Calu3 (cell line): ENCODE measurements at regions of chr6 and their contacts with region 1.

Region 1: DNA sequence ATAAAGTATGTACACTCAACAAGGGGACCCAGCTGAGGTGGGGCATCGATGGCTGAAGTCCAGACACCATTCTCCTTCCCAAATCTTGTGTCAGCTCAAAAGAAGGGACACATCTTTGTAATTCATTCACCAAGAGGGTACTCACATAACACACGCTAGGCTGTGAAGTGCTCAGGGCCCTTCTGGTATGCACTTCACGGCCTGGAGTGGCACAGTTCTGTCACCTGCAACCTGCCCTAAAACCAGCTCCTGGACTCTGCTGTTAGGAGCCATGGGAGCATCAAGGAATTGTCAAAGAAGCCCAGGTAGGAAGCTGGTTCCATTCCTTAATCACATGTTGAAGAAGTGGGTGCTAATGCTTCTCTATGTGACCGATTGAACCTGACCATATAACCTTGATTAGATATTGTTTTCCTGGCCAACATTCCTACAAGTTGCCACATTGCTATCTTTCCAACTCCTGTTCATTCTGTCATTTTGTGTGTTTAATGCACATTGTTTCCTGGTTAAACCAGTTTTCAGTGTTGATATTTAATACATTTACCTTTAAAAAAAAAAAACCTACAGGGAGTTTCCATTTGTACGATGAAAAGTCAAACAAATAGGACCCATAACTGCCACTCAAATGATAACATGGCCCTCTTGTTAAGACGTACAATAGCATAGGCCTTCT is 127.3 kb downstream of the TNFRSF21 start:
- DNase-seq: peak; percentile 20
- H3K4me3 Mint-ChIP-seq: peak overlapping the region; percentile 7
- H3K27ac Mint-ChIP-seq: peak overlapping the region; percentile 77
- H3K4me1 Mint-ChIP-seq: peaks cover 60% of the 10 kb centered on the region
- H3K27me3 Mint-ChIP-seq: no peaks in the 10 kb centered on the region
- CTCF ChIP-seq: no peak

Region 2: GRCh38 chr6:47153032-47153755 is 29.2 kb before region 1 on chr6:
- CTCF ChIA-PET with region 1: no interaction called
- intact Hi-C with region 1: loop called (anchors 1 kb)
- DNase-seq: peak; percentile 31
- H3K4me3 Mint-ChIP-seq: no peak overlapping the region
- H3K27ac Mint-ChIP-seq: peak overlapping the region; percentile 10
- H3K4me1 Mint-ChIP-seq: peaks cover 48% of the 10 kb centered on the region
- H3K27me3 Mint-ChIP-seq: no peaks in the 10 kb centered on the region
- CTCF ChIP-seq: no peak

Region 3: GRCh38 chr6:47161176-47161687 is 21.2 kb before region 1 on chr6:
- CTCF ChIA-PET with region 1: interaction called, 3 read pairs
- intact Hi-C with region 1: loop called (anchors 2 kb)
- DNase-seq: peak; percentile 68
- H3K4me3 Mint-ChIP-seq: peak overlapping the region; percentile 10
- H3K27ac Mint-ChIP-seq: peak overlapping the region; percentile 93
- H3K4me1 Mint-ChIP-seq: peaks cover 40% of the 10 kb centered on the region
- H3K27me3 Mint-ChIP-seq: no peaks in the 10 kb centered on the region
- CTCF ChIP-seq: no peak